Transverse colon (tissue), 4 donors: ENCODE measurements at regions of chr22 and their contacts with region 1.

Region 1: GRCh38 chr22:41876275-41876674 is 38.6 kb downstream of the SHISA8 start:
- DNase-seq: no peak
- H3K4me3 ChIP-seq: no peak overlapping the region
- H3K27ac ChIP-seq: no peak overlapping the region
- H3K4me1 ChIP-seq: no peaks in the 10 kb centered on the region
- H3K27me3 ChIP-seq: no peaks in the 10 kb centered on the region
- CTCF ChIP-seq: no peak
- EP300 ChIP-seq: no peak
- POLR2A ChIP-seq: no peak

Region 2: GRCh38 chr22:41062146-41062545 is 814.1 kb before region 1 on chr22:
- in situ Hi-C with region 1: no loop called
- intact Hi-C with region 1: loop called (anchors 5 kb)
- DNase-seq: no peak
- H3K4me3 ChIP-seq: no peak overlapping the region
- H3K27ac ChIP-seq: no peak overlapping the region
- H3K4me1 ChIP-seq: no peaks in the 10 kb centered on the region
- H3K27me3 ChIP-seq: no peaks in the 10 kb centered on the region
- CTCF ChIP-seq: no peak
- EP300 ChIP-seq: no peak
- POLR2A ChIP-seq: no peak

Region 3: GRCh38 chr22:41481131-41481830 is 395.0 kb before region 1 on chr22:
- in situ Hi-C with region 1: no loop called
- intact Hi-C with region 1: no loop called
- DNase-seq: no peak
- H3K4me3 ChIP-seq: no peak overlapping the region
- H3K27ac ChIP-seq: peak overlapping the region; percentile 69 to 77 (median 72)
- H3K4me1 ChIP-seq: peaks cover 16 to 74% (median 47%) of the 10 kb centered on the region in 4 donors
- H3K27me3 ChIP-seq: no peaks in the 10 kb centered on the region
- CTCF ChIP-seq: no peak
- EP300 ChIP-seq: no peak
- POLR2A ChIP-seq: no peak